Activated CD8-positive, alpha-beta T cell treated with anti-CD3 and anti-CD28 coated beads, Interleukin-2, amount 10 ng/mL, durations not matched to agents 7 days and 5 days (primary cell): ENCODE measurements at regions of chr18 and their contacts with region 1.

Region 1: DNA sequence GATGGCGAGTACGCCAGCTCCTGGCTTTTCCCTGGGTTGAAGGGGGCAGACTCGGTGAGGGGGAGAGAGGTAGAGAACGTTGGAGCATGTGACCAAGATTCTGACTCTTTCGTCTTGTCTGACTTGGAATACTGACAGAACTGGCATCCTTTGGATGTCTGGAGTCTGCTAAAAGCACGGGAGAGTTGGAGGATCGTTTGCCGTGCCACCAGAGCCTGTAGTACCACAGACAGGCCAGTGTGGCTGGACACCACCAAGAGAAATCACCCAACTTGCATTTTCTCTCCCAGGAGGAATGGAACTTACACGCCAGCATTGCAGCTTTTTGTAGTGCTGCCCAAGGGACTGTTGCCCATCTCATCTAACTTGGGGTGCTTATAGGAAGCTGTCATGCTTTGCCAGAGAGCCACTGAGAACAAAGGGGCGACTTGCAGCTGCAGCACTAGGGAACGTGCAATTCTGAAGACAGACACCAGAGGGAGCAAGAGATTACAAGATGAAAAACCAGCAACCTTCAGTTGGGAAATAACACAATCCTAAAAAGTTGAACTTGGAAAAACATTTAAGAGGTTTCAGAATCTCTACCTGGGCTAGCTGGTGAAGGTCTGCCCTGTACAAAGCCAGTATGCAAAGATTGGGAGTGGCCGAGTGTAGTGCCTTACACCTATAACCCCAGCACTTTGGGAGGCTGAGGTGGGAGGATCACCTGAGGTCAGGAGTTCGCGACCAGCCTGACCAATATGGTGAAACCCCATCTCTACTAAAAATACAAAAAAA is 24.1 kb downstream of the PSMG2 start:
- DNase-seq: peak; percentile 75
- ATAC-seq: peak; percentile 61
- H3K4me3 Mint-ChIP-seq: no peak overlapping the region
- H3K27ac Mint-ChIP-seq: no peak overlapping the region
- H3K4me1 Mint-ChIP-seq: peaks cover 3% of the 10 kb centered on the region
- H3K27me3 Mint-ChIP-seq: no peaks in the 10 kb centered on the region

Region 2: DNA sequence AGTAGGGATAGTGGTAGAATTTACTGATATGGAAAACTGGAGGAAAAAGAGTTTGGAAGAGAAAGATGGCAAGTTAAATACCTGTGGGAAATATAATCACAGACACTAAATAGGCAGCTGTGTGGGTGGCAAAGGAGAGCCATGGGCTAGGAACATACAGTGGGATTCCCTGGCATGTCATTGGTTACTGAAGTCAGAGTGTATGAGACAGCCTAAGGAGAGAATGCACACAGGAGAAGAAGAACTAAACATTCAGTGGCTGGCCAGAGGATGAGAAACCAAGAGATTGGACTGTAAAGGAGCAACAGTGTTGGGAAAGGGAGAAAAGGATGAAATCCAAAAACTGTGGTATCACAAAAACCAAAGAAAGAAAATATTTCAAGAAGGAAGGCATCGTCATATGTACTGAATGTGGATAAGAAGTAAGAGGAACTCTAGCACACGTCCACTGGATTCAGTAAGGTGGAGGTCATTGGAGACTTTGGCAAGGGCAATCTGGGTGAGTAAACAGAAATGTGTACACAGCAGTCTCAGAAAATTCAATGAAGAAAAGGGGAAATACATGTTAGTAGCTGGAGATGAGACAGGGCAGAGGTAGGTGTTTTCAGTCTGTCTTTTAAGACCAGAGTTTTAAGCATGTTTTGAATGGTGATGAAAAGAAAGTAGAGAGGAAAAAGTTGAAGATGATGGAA is 152.3 kb before region 1 on chr18:
- CTCF ChIA-PET with region 1: no interaction called
- POLR2A ChIA-PET with region 1: no interaction called
- DNase-seq: no peak
- ATAC-seq: no peak
- H3K4me3 Mint-ChIP-seq: no peak overlapping the region
- H3K27ac Mint-ChIP-seq: no peak overlapping the region
- H3K4me1 Mint-ChIP-seq: no peaks in the 10 kb centered on the region
- H3K27me3 Mint-ChIP-seq: peaks cover 12% of the 10 kb centered on the region

Region 3: GRCh38 chr18:12921178-12921577 is 194.2 kb after region 1 on chr18:
- CTCF ChIA-PET with region 1: interaction called, 13 read pairs
- POLR2A ChIA-PET with region 1: interaction called, 4 read pairs
- DNase-seq: peak; percentile 50
- ATAC-seq: peak; percentile 90
- H3K4me3 Mint-ChIP-seq: peak overlapping the region; percentile 22
- H3K27ac Mint-ChIP-seq: peak overlapping the region; percentile 67
- H3K4me1 Mint-ChIP-seq: peaks cover 18% of the 10 kb centered on the region
- H3K27me3 Mint-ChIP-seq: peaks cover 6% of the 10 kb centered on the region